ENCODE measurements at regions of chr10 and their contacts with region 1.

Region 1: GRCh38 chr10:80078448-80079311 is at the start of gene TMEM254:
- DNase-seq: peak; percentile 17
- H3K4me3 ChIP-seq: peak within 1 kb of the TSS; percentile 62
- CTCF ChIP-seq: no peak

Region 2: GRCh38 chr10:80064120-80064886 is 14.4 kb before region 1 on chr10:
- CTCF ChIA-PET with region 1: interaction called, 11 read pairs
- POLR2A ChIA-PET with region 1: no interaction called
- DNase-seq: no peak
- H3K4me3 ChIP-seq: no peak overlapping the region
- CTCF ChIP-seq: no peak

Region 3: DNA sequence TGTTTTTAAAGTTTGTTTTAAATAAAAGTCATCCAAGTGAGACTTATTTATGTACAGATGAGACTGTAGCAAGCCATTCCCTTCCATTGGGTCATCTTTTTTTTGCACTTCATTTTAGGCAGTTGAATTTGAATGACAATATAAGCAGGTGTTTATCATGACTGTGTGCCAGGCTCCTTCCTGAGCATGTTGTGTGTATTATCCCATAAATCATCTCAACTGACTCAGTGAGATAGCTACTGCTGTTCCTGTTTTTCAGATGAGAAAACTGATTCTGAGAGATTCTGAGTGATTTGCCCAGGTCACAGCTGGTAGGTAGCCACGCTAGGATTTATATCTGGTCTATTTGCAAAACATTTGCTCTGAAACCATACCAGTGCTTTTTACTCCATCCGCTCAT is 11.4 kb after region 1 on chr10:
- CTCF ChIA-PET with region 1: no interaction called
- POLR2A ChIA-PET with region 1: no interaction called
- DNase-seq: no peak
- H3K4me3 ChIP-seq: no peak overlapping the region
- CTCF ChIP-seq: no peak

Region 4: GRCh38 chr10:80909254-80909653 is 830.6 kb after region 1 on chr10:
- CTCF ChIA-PET with region 1: no interaction called
- POLR2A ChIA-PET with region 1: no interaction called
- DNase-seq: no peak
- H3K4me3 ChIP-seq: no peak overlapping the region
- CTCF ChIP-seq: no peak

Measured in AG04449 (cell line).